ENCODE measurements at regions of chr12 and their contacts with region 1.

Region 1: DNA sequence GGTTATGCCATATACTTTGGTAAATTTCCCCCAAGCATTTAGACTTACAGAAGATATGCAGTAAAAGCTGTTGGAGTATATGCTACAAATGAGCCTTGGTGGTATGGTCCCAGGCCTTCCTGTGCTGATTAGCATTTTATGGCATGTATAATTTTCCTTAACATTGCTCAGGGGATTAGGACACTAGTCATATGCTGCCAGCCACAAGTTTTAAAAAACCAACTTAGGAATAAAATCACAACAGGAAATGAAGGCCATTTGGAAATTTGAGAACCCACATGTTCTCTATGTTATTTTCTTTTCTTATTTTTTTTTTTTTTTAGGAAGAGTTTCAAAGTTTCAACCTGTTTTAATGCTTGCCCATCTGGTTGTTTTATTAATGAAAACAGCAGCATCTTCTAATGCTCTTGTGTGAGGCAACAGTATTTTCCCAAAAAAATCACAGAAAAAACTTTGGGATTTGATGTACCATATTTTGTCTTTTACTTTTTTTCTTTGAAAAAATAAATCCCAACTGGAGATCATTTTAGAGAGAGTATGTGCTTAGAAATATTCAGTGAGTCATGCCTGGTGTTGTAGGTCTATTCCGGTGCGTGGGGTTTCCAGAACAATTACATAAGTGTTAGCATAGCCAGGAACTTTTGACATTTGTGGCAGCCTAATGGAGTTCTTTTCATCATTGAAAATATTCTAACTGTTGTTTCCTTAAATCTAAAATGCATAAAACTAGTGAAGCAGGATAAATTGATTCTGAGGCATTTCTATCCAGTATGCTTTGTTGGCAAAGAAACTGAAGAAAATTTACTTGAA is 21.7 kb upstream of the DUSP6 start:
- DNase-seq: peak in 1 of 2 experiments; percentile 32
- H3K4me3 ChIP-seq: no peak overlapping the region
- H3K27ac ChIP-seq: no peak overlapping the region
- H3K4me1 ChIP-seq: peaks cover 25% of the 10 kb centered on the region
- H3K27me3 ChIP-seq: no peaks in the 10 kb centered on the region
- CTCF ChIP-seq: no peak

Region 2: GRCh38 chr12:89451841-89452251 is 77.9 kb after region 1 on chr12:
- CTCF ChIA-PET with region 1: no interaction called
- POLR2A ChIA-PET with region 1: no interaction called
- intact Hi-C with region 1: loop called (anchors 5 kb)
- DNase-seq: no peak
- H3K4me3 ChIP-seq: no peak overlapping the region
- H3K27ac ChIP-seq: no peak overlapping the region
- H3K4me1 ChIP-seq: 0 out of 2 replicates have a peak, but pooled peaks cover 9% of the 10 kb centered on the region
- H3K27me3 ChIP-seq: no peaks in the 10 kb centered on the region
- CTCF ChIP-seq: no peak

Measured in PC-9 (cell line).